AG04449 (cell line): ENCODE measurements at regions of chr16 and their contacts with region 1.

Region 1: GRCh38 chr16:9008601-9009260 is 45.0 kb upstream of the USP7 start:
- DNase-seq: no peak
- H3K4me3 ChIP-seq: peak overlapping the region; percentile 30
- CTCF ChIP-seq: peak; percentile 95

Region 2: DNA sequence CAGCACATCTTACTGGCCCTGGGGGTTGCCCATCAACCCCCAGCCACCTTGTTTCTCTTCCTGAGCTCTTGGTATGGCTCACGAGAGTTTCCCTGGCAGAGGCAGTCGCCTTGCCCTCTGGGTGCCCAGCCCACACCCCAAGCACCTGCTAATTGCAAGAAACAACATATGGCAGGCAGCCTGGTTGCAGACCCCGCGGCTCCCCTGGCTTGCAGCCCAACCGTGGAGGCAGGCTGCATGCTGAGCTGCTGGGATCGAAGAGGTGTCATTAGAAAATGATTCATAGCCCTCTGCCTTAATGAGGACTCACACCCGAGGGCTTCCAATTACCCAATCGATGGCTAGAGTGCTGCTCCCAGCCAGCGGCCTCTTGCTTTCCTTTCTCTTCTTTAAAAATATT is 534.1 kb before region 1 on chr16:
- CTCF ChIA-PET with region 1: no interaction called
- POLR2A ChIA-PET with region 1: no interaction called
- DNase-seq: no peak
- H3K4me3 ChIP-seq: no peak overlapping the region
- CTCF ChIP-seq: no peak

Region 3: GRCh38 chr16:8885674-8886592 is 122.8 kb before region 1 on chr16:
- CTCF ChIA-PET with region 1: interaction called, 44 read pairs
- POLR2A ChIA-PET with region 1: no interaction called
- DNase-seq: no peak
- H3K4me3 ChIP-seq: no peak overlapping the region
- CTCF ChIP-seq: peak; percentile 6

Region 4: DNA sequence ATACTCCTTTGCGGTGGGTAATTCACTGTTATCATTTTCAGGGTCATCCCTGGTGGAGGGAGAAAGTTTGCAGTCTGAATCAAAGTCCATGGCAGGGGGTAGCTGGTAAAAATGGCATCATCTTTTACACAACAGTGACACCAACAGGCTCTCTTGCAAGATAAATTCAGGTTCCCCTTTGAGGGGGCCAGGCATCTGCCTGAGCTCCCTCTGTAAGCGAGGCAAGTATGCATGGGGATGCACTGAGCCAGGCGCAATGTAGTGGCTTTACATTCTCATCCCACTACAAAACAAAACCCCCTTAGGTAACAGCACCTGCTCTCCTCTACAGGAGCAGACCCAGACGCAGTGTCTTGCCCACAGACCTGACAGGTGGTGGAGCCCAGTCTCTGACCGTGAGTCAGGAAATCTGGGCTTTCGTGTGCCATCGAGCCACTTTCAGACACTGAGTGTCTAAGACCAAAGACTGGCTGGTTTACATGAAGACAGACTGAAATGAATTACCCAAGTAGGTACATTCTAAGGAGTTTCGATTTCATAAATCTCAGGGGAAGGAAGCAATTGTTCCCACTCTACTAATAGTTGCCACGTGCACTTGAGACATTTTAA is 108.9 kb before region 1 on chr16:
- CTCF ChIA-PET with region 1: interaction called, 44 read pairs
- POLR2A ChIA-PET with region 1: no interaction called
- DNase-seq: no peak
- H3K4me3 ChIP-seq: no peak overlapping the region
- CTCF ChIP-seq: no peak

Region 5: DNA sequence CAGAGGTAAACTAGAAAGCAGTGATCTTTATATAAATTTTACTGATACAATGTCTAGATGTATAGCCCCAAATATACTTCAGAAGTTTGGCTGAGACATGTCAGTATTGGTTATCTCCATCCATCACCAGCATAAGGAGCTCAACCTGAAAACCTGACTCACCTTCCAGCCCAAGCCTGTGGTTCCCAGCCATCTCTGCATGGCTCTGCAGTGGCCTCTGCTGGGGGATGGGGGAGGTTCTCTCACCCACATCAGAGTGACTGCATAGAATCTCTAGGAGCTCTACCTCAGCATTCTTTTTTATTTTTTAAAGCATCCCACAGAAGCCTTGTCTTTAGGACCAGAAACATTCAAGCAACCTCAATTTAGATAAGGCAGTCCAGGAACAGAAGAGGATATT is 72.3 kb before region 1 on chr16:
- CTCF ChIA-PET with region 1: interaction called, 26 read pairs
- POLR2A ChIA-PET with region 1: no interaction called
- DNase-seq: no peak
- H3K4me3 ChIP-seq: no peak overlapping the region
- CTCF ChIP-seq: peak; percentile 64

Region 6: DNA sequence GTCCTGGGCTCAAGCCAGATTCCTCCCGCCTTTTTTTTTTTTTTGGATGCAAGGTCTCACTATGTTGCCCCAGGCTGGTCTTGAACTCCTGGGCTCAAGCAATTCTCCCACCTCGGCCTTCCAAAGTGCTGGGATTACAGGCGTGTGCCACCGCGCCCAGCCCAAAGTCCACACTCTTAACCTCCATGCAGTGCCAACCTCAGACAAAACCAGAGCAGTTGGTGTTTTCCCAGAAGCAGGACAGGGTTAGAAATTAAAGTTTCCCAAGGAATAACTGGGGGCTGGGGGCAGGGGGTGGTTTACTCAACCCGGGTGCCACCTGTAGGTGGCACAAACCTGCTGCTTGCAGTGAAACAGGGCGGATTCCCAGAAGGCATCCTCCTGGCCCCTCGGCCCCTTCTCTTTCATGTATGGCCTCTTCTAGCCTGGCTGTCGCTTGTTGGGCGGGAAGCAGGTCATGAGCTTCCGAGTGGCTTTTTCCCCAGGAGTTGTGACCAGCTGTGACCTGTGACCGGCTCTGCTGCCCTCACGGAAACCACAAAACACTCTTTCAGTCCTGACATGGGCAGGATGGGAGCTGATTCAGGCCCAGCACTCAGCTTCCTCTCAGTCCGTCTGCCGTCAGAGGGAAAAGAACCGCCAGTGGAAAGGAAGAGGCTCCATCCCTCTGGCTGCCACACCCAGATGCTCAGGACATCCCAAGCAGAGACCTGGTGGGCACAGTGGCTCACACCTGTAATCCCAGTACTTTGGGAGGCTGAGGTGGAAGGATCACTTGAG is 19.4 kb before region 1 on chr16:
- CTCF ChIA-PET with region 1: interaction called, 34 read pairs
- POLR2A ChIA-PET with region 1: no interaction called
- DNase-seq: no peak
- H3K4me3 ChIP-seq: no peak overlapping the region
- CTCF ChIP-seq: no peak

Region 7: DNA sequence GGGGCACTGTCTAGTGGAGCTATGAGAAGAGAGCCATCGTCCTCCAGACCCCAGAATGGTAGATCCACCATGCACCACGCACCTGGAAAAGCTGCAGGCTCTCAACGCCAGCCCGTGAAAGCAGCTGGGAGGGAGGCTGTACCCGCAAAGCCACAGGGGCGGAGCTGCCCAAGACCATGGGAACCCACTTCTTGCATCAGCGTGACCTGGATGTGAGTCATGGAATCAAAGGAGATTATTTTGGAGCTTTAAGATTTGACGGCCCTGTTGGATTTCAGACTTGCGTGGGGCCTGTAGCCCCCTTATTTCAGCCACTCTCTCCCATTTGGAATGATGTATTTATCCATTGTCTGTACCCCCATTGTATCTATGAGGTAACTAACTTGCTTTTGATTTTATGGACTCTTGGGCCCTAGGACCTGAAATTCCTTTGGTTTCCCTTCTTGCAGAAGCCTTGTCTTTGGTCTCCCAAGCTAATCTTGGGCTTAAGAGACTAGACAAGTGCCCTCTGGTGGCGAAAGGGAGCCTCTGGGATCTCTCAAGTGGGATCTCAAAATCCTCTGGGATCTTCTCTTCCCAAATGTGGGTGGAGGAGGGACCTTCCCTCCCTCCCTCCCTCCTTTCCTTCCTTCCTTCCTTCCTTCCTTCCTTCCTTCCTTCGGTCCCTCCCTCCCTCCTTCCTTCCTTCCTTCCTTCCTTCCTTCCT is 24.5 kb after region 1 on chr16:
- CTCF ChIA-PET with region 1: interaction called, 14 read pairs
- POLR2A ChIA-PET with region 1: no interaction called
- DNase-seq: no peak
- H3K4me3 ChIP-seq: no peak overlapping the region
- CTCF ChIP-seq: peak; percentile 62

Region 8: DNA sequence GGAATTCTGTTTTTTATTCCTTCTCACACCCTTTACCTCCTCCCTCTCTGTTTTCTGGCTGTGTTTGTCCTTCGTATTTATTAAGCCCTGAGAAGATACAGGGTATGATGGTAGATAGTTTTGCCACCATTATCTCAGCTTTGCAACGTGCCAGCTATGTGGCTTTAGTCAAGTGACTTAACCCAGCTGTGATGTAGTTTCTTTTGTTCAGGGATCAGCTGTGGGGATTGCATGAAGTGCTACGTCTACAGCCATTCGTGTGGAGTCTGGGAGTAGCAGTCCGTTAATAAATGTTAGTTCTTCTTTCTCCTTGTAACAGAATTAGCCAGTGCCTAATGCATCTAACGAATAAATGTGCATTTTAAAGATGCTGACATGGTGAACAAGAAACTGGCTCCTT is 211.1 kb after region 1 on chr16:
- CTCF ChIA-PET with region 1: no interaction called
- POLR2A ChIA-PET with region 1: no interaction called
- DNase-seq: no peak
- H3K4me3 ChIP-seq: no peak overlapping the region
- CTCF ChIP-seq: no peak

Region 9: GRCh38 chr16:9286930-9287329 is 278.2 kb after region 1 on chr16:
- CTCF ChIA-PET with region 1: no interaction called
- POLR2A ChIA-PET with region 1: no interaction called
- DNase-seq: no peak
- H3K4me3 ChIP-seq: no peak overlapping the region
- CTCF ChIP-seq: no peak